ENCODE measurements at regions of chr10 and their contacts with region 1.

Region 1: DNA sequence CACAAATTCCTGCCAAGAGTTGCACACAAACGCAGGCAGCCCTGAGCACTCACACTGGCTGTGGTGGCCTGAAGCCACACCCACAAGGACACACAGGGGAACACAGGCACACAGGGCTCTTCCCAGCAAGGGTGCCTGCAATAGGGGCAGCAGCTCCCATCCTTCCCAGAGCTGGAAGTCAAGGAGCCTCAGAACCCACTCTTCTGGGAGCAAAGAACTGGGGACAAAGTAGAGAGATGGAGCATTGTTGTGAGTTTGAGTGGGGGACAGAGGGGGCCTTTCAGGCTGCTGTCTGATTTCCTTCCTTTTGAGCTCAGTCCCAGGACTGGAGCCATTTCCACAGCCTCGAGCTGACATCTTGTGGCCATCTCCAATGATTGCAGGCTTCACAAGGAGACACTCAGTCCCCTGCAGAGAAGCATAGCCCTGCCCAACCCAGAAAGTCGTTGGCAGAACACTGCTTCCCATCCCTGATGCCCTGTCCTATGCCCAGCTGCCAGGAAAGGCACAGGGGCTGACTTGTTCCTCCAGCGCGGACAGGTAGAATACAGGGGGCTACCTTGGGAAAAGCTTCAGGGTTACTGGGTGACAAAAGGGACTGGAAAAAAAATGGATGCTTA is 34.4 kb upstream of the SLF2 start:
- DNase-seq: no peak
- H3K4me3 ChIP-seq: no peak overlapping the region
- H3K27me3 ChIP-seq: no peaks in the 10 kb centered on the region; the same call in 1 of the 2 replicates
- CTCF ChIP-seq: peak; percentile 85

Region 2: GRCh38 chr10:100481462-100482081 is 396.8 kb before region 1 on chr10:
- CTCF ChIA-PET with region 1: interaction called, 18 read pairs
- POLR2A ChIA-PET with region 1: no interaction called
- DNase-seq: peak; percentile 52
- H3K4me3 ChIP-seq: peak overlapping the region; percentile 21
- H3K27me3 ChIP-seq: peaks cover 18% of the 10 kb centered on the region
- CTCF ChIP-seq: no peak

Region 3: DNA sequence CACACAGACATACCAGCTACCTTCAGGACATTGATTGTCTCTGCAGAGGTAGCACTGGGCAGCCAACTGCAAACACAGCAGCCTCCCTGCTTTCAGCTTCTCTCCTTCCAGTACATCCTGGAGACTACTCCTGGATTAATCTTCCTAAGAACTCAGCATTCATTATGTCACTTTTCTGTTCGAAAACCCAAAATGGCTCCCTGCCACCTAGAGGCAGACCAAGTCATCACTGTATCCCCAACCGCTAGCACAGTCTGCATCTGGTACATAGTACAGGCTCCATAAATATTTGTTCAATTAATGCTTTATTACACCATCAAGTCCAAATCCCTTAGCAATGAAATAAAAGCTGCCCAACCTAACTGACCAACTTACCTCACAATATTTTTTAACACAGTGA is 353.8 kb before region 1 on chr10:
- CTCF ChIA-PET with region 1: interaction called, 11 read pairs
- POLR2A ChIA-PET with region 1: no interaction called
- DNase-seq: no peak
- H3K4me3 ChIP-seq: no peak overlapping the region
- H3K27me3 ChIP-seq: no peaks in the 10 kb centered on the region
- CTCF ChIP-seq: no peak

Region 4: DNA sequence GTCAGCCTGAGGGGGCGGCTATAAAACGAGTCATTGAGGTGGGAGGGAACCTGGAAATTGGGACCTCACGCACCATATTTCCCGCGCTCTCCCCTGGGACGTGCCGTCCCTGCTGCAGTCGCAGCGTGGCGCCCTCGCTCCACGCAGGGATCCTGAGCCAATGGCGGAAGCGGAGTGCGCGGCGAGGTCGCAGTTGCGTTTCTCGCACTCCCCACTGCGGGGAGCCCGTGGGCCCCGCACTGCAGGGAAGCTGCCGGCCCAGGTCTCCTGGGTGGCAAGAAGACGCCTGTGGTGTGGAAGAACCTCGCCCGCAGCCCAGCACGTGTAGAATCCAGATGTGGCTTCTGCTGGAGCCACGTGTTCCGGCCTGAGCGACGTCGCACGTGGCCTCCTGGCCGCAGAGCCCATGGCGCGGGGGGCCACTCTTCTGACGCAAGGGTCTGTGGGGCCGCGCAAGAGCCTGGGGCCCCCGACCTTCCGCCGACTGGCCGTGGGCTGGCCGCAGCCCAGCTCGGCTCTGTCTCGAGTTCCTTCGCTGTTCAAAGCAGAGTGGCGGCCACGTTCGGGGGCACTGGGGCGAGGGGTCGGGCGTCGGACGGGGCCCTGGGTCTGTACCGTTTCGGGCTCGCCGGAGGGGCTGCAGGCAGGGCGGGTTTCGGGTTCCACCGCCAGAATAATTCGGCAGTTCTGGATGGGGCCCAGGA is 316.2 kb before region 1 on chr10:
- CTCF ChIA-PET with region 1: interaction called, 18 read pairs
- POLR2A ChIA-PET with region 1: no interaction called
- DNase-seq: no peak
- H3K4me3 ChIP-seq: no peak overlapping the region
- H3K27me3 ChIP-seq: peaks cover 8% of the 10 kb centered on the region
- CTCF ChIP-seq: peak; percentile 77

Region 5: DNA sequence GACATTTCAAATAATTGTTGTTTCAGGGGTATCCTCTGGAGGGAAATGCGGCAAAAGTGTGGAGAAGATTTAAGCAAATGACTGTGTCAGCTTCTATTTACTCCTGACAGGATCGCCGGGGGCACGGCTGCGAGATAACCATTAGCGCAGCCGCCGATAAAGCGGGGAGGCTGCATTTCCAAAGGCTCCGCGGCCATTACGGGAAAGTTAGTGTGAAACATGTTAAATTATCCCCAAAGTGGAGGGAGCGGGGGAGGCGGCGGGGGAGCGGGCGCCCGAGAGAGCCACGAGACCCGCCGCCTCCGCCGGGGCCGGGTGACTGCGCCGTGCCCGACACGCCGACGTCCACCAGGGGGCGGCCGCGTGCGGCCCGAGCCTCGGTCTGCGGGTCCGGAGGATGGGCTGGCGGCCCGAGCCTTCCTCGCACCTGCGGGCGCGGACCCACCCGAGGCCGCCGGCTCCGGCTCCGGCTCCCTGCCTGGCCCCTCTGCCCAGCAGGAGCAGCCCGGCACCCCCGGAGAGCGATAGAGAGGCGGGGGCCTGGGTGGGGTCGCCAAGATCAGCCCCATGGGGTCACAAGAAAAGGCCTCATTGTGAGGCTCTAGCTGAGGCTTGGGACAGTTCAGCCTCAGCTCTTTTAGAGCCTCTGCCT is 207.4 kb before region 1 on chr10:
- CTCF ChIA-PET with region 1: interaction called, 15 read pairs
- POLR2A ChIA-PET with region 1: no interaction called
- DNase-seq: no peak
- H3K4me3 ChIP-seq: no peak overlapping the region
- H3K27me3 ChIP-seq: peaks cover 21% of the 10 kb centered on the region
- CTCF ChIP-seq: 0 out of 2 replicates have a peak, but pooled peaks have one; percentile 21

Region 6: DNA sequence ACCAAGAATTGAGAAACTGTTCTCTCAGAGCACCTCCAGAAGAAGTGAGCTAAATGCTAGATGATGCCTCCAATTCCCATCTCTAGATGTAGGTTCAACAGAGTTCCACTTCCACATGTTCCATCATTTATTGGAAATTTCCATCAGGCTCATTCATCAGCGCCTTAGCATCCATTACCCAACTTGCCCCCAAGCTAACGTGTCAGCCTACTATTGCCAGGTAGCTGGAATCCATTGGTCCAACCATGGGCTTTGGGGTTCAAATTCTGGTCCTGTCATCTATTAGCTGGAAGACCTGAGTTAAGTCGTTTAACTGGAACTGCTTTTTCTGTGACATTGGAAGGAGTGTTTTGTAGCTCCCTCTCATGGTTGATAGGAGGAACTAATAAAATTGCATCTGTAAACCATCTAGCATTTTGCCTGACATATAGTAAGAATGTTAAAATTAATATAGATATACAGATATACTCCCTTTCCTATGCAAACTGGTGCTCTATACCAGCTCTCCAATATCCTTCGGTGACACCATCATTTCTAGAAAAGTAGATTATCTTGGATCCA is 10.5 kb after region 1 on chr10:
- CTCF ChIA-PET with region 1: interaction called, 12 read pairs
- POLR2A ChIA-PET with region 1: no interaction called
- DNase-seq: no peak
- H3K4me3 ChIP-seq: no peak overlapping the region
- H3K27me3 ChIP-seq: no peaks in the 10 kb centered on the region
- CTCF ChIP-seq: no peak